ENCODE measurements at regions of chr3 and their contacts with region 1.

Region 1: DNA sequence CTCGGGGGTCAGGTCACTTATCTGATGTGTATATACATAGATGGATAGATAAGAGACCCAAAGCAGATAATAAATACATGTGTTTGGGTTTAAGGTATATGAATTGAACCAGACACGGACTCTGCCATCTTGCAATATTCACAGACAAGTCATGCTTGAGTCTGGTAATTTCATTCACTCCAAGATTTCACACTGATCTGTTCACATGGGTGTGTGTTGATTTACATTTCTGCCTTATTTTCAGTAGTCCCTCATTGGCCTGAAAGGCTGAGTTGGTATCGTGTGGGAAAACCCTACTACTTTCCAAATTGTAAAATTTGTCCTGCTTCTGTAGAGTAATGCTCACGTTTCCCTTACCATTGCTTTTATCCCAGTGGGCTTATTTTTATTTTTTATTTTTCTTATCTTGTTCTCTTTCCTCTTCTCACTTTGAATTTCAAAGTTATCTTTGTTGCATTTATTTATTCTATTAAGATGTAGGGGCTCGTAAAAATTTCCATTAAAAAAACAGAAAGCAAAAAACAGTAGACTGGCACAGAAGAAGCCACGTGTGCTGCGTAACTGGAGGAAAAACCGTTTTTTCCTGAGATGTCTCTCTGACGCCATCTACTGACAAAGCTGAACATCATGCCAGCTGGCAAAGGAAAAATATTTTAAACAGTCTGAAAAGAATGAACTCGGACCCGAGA is 10.8 kb upstream of the MFSD1 start:
- DNase-seq: peak in 7 of 9 donors; percentile 38 to 66 (median 56)
- ATAC-seq: peak; percentile 82
- H3K4me3 ChIP-seq: no peak overlapping the region
- H3K4me3 Mint-ChIP-seq: peak overlapping the region; percentile 35 to 88 (median 66)
- H3K27ac ChIP-seq: no peak overlapping the region
- H3K27ac Mint-ChIP-seq: peak overlapping the region in 1 of 9 donors; percentile 16
- H3K4me1 ChIP-seq: no peaks in the 10 kb centered on the region
- H3K4me1 Mint-ChIP-seq: peaks cover 3 to 8% (median 4%) of the 10 kb centered on the region in 7 donors
- H3K27me3 ChIP-seq: no peaks in the 10 kb centered on the region
- H3K27me3 Mint-ChIP-seq: peaks cover 0 to 10% (median 0%) of the 10 kb centered on the region in 5 donors

Region 2: GRCh38 chr3:157618075-157618760 is 1172.8 kb before region 1 on chr3:
- CTCF ChIA-PET with region 1: no interaction called
- POLR2A ChIA-PET with region 1: no interaction called
- intact Hi-C with region 1: loop called in 1 of 2 experiments (anchors 10 kb)
- DNase-seq: peak in 6 of 9 donors; percentile 4 to 44 (median 24)
- ATAC-seq: peak; percentile 78
- H3K4me3 ChIP-seq: no peak overlapping the region
- H3K4me3 Mint-ChIP-seq: peak overlapping the region in 1 of 10 donors; percentile 3
- H3K27ac ChIP-seq: no peak overlapping the region
- H3K27ac Mint-ChIP-seq: peak overlapping the region in 1 of 9 donors; percentile 5
- H3K4me1 ChIP-seq: peaks cover 0 to 4% of the 10 kb centered on the region in 2 donors
- H3K4me1 Mint-ChIP-seq: peaks cover 0 to 6% (median 5%) of the 10 kb centered on the region in 7 donors
- H3K27me3 ChIP-seq: no peaks in the 10 kb centered on the region
- H3K27me3 Mint-ChIP-seq: peaks cover 10 to 22% (median 13%) of the 10 kb centered on the region in 5 donors

Region 3: GRCh38 chr3:158018462-158018861 is 772.6 kb before region 1 on chr3:
- CTCF ChIA-PET with region 1: no interaction called
- POLR2A ChIA-PET with region 1: no interaction called
- intact Hi-C with region 1: no loop called
- DNase-seq: no peak
- ATAC-seq: no peak
- H3K4me3 ChIP-seq: no peak overlapping the region
- H3K4me3 Mint-ChIP-seq: no peak overlapping the region
- H3K27ac ChIP-seq: no peak overlapping the region
- H3K27ac Mint-ChIP-seq: no peak overlapping the region
- H3K4me1 ChIP-seq: no peaks in the 10 kb centered on the region
- H3K4me1 Mint-ChIP-seq: no peaks in the 10 kb centered on the region
- H3K27me3 ChIP-seq: no peaks in the 10 kb centered on the region
- H3K27me3 Mint-ChIP-seq: peaks cover 0 to 10% (median 6%) of the 10 kb centered on the region in 5 donors

Region 4: DNA sequence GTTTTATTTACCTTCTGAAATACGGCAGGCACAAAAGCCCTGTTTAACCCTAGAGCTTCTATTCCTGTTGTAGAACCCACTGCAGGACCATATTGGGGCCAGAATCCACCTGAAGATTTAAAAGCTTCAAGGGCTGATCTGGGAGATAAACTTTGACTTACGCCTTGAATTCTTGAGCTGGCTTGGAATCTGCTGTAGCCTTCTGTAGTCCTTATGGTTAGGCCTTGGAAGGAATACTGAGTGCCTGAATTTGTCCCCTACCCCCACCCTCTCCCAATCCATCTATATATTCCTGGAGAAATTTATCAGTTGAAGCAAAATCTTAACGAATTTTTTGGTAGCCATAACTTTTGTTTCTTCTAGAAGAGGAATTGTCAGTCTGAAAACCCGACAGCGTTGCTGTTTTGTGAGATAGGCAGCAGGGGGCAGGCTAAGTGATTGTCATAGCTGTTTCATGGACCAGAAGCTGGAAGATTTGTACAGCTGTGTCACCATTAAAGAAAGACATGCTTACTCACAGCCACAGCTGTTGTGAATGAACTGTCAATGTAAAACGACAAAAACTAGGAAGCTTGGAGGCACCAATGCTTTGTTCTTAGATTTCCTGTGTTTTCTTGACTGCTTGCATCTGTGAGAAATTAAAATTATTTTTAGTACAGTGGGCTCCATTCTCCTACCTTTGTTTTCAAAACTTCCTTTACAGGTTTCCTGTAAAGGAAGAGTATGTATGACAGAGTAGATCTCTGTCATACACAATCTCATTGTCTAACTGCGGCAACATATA is 131.4 kb before region 1 on chr3:
- CTCF ChIA-PET with region 1: interaction called, 36 read pairs
- POLR2A ChIA-PET with region 1: interaction called, 4 read pairs
- intact Hi-C with region 1: loop called (anchors 1 kb)
- DNase-seq: peak in 8 of 9 donors; percentile 23 to 57 (median 39)
- ATAC-seq: peak; percentile 92
- H3K4me3 ChIP-seq: no peak overlapping the region
- H3K4me3 Mint-ChIP-seq: no peak overlapping the region
- H3K27ac ChIP-seq: no peak overlapping the region
- H3K27ac Mint-ChIP-seq: peak overlapping the region in 4 of 9 donors; percentile 21 to 62 (median 30)
- H3K4me1 ChIP-seq: no peaks in the 10 kb centered on the region
- H3K4me1 Mint-ChIP-seq: peaks cover 0 to 17% (median 7%) of the 10 kb centered on the region in 7 donors
- H3K27me3 ChIP-seq: no peaks in the 10 kb centered on the region
- H3K27me3 Mint-ChIP-seq: no peaks in the 10 kb centered on the region

Region 5: DNA sequence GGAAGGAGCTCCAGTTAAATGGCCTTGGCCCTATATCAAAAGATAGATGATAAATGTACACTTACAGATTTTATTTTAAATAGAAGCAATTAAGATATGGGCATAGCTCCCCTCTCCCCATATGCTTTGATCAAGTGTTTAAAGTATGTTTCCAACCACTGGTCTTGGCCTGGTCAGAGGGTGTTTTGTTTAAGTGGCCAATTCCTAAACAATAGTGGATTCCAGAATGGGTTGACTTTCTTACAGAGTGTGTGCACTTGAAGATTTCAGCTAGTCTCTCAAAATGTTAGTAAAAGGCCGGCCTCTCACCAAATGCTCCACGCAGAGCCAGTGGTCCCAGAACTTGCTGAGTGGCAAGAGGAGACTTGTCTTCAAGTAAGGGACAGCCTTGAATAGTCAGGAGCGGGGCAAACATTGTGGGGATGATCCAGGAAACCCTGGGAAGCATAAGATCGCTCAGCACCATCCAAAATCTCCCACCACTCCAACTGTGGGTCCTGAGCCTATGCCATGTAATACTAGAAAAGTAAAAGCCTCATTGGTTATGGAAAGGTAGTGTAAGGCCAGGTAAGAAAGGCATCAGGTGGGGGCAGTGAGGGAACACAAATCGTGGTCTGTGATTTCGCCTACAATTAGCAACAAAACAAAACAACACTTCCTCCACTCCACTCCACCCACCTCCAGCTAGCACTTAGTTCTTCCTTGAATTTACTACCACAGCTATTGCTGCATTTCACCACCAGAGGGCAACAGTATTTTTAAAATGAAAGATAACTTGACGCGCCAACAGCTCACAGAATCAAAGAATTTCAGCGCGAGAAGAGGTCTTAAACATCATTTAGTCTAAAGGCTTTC is 63.6 kb before region 1 on chr3:
- CTCF ChIA-PET with region 1: interaction called, 42 read pairs
- POLR2A ChIA-PET with region 1: interaction called, 3 read pairs
- intact Hi-C with region 1: loop called (anchors 1 kb)
- DNase-seq: peak in 7 of 9 donors; percentile 35 to 74 (median 63)
- ATAC-seq: peak; percentile 79
- H3K4me3 ChIP-seq: peak overlapping the region; percentile 18
- H3K4me3 Mint-ChIP-seq: peak overlapping the region in 9 of 10 donors; percentile 42 to 75 (median 64)
- H3K27ac ChIP-seq: no peak overlapping the region
- H3K27ac Mint-ChIP-seq: peak overlapping the region; percentile 51 to 95 (median 90)
- H3K4me1 ChIP-seq: peaks cover 10% of the 10 kb centered on the region in 2 donors
- H3K4me1 Mint-ChIP-seq: peaks cover 10 to 62% (median 30%) of the 10 kb centered on the region in 7 donors
- H3K27me3 ChIP-seq: no peaks in the 10 kb centered on the region
- H3K27me3 Mint-ChIP-seq: peaks cover 0 to 4% (median 0%) of the 10 kb centered on the region in 5 donors

Region 6: GRCh38 chr3:159260049-159260662 is 469.1 kb after region 1 on chr3:
- CTCF ChIA-PET with region 1: no interaction called
- POLR2A ChIA-PET with region 1: no interaction called
- intact Hi-C with region 1: loop called (anchors 1 to 2 kb)
- DNase-seq: peak in 6 of 9 donors; percentile 2 to 39 (median 18)
- ATAC-seq: peak; percentile 40
- H3K4me3 ChIP-seq: no peak overlapping the region
- H3K4me3 Mint-ChIP-seq: no peak overlapping the region
- H3K27ac ChIP-seq: no peak overlapping the region
- H3K27ac Mint-ChIP-seq: no peak overlapping the region
- H3K4me1 ChIP-seq: no peaks in the 10 kb centered on the region
- H3K4me1 Mint-ChIP-seq: no peaks in the 10 kb centered on the region
- H3K27me3 ChIP-seq: no peaks in the 10 kb centered on the region
- H3K27me3 Mint-ChIP-seq: peaks cover 4 to 37% (median 5%) of the 10 kb centered on the region in 5 donors

Measured in naive thymus-derived CD4-positive, alpha-beta T cell (primary cell).